WTC11 (cell line): ENCODE measurements at regions of chr2 and their contacts with region 1.

Region 1: DNA sequence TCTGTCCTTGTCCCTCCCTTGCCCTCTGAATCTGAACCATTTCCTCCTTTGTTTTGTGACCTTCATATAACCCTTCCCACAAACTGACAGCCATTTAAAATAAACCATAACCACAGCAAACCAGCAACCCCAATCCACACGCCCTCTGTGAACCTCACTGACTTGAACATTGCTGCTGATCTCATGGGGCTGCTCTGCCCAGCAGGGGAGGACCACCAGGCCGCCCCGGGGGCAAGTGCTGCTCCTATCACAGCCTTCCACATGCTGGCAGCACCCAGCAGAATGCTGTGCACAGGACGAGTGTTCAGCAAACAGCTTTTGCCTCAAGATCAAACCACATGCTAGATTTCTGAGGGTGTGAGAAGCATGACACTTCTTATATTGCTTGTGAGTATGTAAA is 73.9 kb upstream of the UXS1 start:
- DNase-seq: no peak
- ATAC-seq: no peak
- H3K4me3 Mint-ChIP-seq: no peak overlapping the region
- H3K27ac Mint-ChIP-seq: no peak overlapping the region
- H3K4me1 Mint-ChIP-seq: peaks cover 17% of the 10 kb centered on the region
- H3K27me3 Mint-ChIP-seq: peaks cover 30% of the 10 kb centered on the region
- CTCF ChIP-seq: no peak

Region 2: DNA sequence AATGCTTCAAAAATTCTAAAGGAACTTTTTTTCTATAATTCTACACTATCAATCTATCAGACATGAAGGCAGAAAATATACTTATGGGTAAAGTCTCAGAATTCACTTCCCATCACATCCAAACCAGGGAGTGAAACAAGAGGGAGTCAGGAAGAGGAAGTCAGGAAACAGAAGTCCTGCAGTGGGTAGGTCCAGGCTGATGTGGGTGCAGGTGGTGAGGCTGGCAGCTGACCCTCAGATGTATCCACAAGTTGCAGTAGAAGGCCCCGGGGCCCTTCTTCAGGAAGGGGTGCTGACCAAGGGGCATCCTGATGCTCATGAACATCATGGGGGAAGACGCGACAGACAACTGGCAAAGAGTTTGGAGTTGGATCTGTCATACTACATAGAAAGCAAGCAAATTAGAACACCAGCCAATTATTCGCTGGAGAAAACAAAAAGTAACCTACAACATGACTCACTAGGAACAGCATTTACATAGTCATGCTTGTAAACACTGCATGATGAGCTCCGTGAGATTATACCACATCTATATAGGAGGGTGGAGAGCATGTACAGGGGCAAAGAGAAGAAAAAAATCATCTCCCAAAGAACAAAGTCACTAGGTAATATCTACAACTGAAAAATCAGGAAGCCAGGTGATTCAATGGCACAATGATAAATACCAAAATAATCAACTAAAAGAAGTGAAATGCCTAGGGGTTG is 78.1 kb before region 1 on chr2:
- CTCF ChIA-PET with region 1: no interaction called
- POLR2A ChIA-PET with region 1: interaction called, 10 read pairs
- DNase-seq: no peak
- ATAC-seq: no peak
- H3K4me3 Mint-ChIP-seq: no peak overlapping the region
- H3K27ac Mint-ChIP-seq: peak overlapping the region; percentile 93
- H3K4me1 Mint-ChIP-seq: peaks cover 55% of the 10 kb centered on the region
- H3K27me3 Mint-ChIP-seq: no peaks in the 10 kb centered on the region
- CTCF ChIP-seq: no peak

Region 3: GRCh38 chr2:106282462-106283202 is 14.6 kb after region 1 on chr2:
- CTCF ChIA-PET with region 1: no interaction called
- POLR2A ChIA-PET with region 1: no interaction called
- DNase-seq: no peak
- ATAC-seq: no peak
- H3K4me3 Mint-ChIP-seq: no peak overlapping the region
- H3K27ac Mint-ChIP-seq: no peak overlapping the region
- H3K4me1 Mint-ChIP-seq: peaks cover 10% of the 10 kb centered on the region
- H3K27me3 Mint-ChIP-seq: no peaks in the 10 kb centered on the region
- CTCF ChIP-seq: no peak